Ascending aorta (tissue), 2 donors: ENCODE measurements at regions of chr19 and their contacts with region 1.

Region 1: GRCh38 chr19:36772311-36773222 is at the start of gene ZNF850:
- DNase-seq: peak; percentile 83 to 95
- H3K4me3 ChIP-seq: peak within 1 kb of the TSS; percentile 69 to 82
- H3K27ac ChIP-seq: peak within 1 kb of the TSS; percentile 74 to 86
- H3K4me1 ChIP-seq: peaks cover 0 to 6% of the 10 kb centered on the region in 2 donors
- H3K27me3 ChIP-seq: no peaks in the 10 kb centered on the region
- CTCF ChIP-seq: no peak
- total RNA-seq, gene ZNF850: 5.1 TPM

Region 2: DNA sequence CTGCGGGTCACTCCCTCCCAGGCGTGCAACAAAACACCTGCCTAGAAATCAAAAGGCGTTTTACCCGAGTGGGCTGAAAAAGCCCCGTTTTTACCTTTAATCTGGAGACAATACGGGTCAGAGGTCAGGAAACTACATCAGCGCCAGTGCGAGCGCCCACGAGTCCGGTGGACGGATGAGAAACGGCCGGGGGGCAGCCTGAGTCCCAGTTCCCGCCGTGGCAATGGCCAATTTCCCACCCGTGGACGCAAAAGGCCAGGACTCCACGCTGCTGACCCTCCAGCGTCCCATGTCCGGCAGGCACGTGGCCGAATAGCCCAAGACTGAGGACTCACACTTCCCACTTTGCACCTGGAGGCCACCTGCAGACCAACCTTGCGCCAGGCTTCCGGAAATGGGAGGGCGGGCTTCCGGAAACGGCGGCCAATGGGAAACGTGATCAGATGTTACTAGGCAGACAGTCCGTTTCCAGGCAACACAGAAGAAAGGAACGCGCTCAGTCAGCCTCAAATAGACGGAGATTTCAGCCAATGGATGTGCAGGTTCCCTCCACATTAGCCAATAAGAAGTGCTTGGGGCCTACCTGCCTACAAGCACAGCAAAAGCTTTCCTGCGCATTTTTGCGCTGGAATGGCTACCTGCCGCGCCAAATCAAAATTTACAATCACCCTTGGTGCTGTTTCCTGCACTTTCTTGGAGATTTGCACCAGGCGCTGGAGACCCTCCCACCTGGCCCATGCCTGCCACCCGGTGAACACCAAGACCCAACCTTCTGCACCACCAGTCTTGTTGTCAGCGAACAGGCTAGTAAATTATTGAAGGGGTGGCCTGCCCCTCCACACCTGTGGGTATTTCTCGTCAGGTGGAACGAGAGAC is 441.0 kb before region 1 on chr19:
- intact Hi-C with region 1: no loop called
- DNase-seq: peak; percentile 43 to 83
- H3K4me3 ChIP-seq: peak overlapping the region; percentile 61 to 67
- H3K27ac ChIP-seq: no peak overlapping the region
- H3K4me1 ChIP-seq: peaks cover 0 to 3% of the 10 kb centered on the region in 2 donors
- H3K27me3 ChIP-seq: no peaks in the 10 kb centered on the region
- CTCF ChIP-seq: no peak

Region 3: DNA sequence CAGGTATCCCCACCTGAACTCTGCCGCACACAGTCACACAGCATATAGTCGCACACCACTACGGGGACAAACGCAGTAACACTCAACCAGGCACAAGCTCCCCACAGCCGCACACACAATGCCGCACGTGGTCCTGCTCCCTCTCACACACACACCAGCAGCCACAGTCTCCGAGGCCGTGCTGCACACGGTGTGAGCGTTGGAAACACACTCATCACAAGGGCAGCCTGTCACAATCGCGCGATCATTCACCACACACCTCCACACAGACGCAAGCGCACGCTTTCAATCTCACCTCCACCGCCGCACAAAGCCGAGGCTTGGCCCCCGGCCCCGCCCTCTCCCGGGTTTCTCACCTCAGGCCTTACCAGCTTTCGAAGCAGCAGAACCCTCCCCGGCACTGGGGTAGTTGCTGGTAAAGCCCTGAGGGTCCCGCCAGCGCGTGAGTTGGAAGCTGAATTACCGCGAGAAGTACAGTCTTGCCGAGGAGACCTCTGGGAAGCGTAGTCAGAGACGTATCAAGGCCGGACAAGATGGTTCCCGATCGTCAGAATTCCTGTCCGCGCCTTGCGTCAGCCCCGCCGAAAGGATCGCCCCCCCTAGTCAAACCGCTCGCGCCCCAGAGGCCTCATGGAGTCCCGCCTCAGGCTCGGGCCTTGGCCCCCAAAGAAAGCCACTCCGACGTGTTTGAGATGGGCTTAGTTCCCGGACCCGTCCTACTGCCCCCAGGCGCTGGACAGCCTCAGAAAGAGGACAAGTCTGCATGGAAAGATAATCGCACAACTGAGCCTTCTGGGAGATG is 283.2 kb before region 1 on chr19 and contains the start of gene ZNF566:
- intact Hi-C with region 1: loop called (anchors 2 kb)
- DNase-seq: peak; percentile 81 to 96
- H3K4me3 ChIP-seq: peak within 1 kb of the TSS; percentile 71 to 72
- H3K27ac ChIP-seq: peak within 1 kb of the TSS; percentile 92 to 94
- H3K4me1 ChIP-seq: peaks cover 0 to 5% of the 10 kb centered on the region in 2 donors
- H3K27me3 ChIP-seq: no peaks in the 10 kb centered on the region
- CTCF ChIP-seq: peak in 1 of 3 experiments; percentile 13
- total RNA-seq, gene ZNF566: 9.9 TPM

Region 4: DNA sequence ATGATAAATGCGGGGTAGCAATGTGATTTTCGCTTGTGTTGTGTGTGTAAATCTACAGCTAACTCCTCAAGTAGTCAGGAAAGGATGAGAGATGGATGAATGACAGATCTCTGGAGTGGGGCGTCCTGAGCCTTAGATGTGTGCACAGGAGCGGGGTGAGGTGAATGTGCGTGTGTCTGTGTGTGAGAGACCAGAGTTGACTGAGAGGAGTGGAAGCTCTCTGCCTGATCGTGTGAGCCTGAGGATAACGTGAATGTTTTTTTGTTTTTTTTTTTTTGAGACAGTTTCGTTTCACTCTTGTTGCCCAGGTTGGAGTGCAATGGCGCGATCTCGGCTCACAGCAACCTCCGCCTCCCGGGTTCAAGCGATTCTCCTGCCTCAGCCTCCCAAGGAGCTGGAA is 106.7 kb before region 1 on chr19:
- intact Hi-C with region 1: loop called (anchors 2 kb)
- DNase-seq: no peak
- H3K4me3 ChIP-seq: peak overlapping the region; percentile 74 to 92
- H3K27ac ChIP-seq: no peak overlapping the region
- H3K4me1 ChIP-seq: peaks cover 0 to 3% of the 10 kb centered on the region in 2 donors
- H3K27me3 ChIP-seq: no peaks in the 10 kb centered on the region
- CTCF ChIP-seq: no peak

Region 5: DNA sequence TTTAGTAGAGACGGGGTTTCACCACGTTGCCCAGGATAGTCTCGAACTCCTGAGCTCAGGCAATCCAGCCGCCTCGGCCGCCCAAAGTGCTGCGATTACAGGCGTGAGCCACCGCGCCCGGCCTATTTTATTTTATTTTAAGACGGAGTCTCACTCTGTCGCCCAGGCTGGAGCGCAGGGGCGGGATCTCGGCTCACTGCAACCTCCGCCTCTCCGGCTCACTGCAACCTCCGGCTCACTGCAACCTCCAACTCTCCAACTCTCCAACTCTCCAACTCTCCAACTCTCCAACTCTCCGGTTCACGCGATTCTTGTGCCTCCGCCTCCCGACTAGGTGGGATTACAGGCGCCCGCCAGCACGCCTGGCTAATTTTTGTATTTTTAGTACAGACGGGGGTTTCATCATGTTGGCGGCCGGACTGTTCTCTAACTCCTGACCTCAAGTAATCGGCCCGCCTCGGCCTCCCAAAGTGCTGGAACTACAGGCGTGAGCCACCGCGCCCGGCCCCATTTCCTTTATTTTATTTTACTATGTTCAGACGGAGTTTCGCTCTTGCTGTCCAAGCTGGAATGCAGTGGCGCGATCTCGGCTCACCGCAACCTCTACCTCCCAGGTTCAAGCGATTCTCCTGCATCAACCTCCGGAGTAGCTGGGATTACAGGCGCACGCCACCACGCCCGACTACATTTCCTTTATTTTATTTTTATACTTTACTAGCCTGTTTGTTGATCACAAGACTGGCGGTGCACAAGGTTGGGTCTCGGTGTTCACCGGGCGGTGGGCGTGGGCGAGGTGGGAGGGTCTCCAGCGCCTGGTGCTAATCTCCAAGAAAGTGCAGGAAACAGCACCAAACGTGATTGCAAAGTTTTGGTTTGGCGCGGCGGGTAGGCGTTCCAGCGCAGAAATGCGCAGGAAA is 23.8 kb after region 1 on chr19:
- intact Hi-C with region 1: loop called (anchors 1 kb)
- DNase-seq: no peak
- H3K4me3 ChIP-seq: peak overlapping the region; percentile 87 to 88
- H3K27ac ChIP-seq: peak overlapping the region in 1 of 2 donors; percentile 68
- H3K4me1 ChIP-seq: peaks cover 0 to 3% of the 10 kb centered on the region in 2 donors
- H3K27me3 ChIP-seq: no peaks in the 10 kb centered on the region
- CTCF ChIP-seq: no peak

Region 6: GRCh38 chr19:36850559-36851442 is 78.2 kb after region 1 on chr19 and contains the start of gene ZNF345:
- intact Hi-C with region 1: loop called (anchors 1 kb)
- DNase-seq: peak; percentile 77 to 96
- H3K4me3 ChIP-seq: peak within 1 kb of the TSS; percentile 78 to 84
- H3K27ac ChIP-seq: peak within 1 kb of the TSS; percentile 83 to 88
- H3K4me1 ChIP-seq: peaks cover 0 to 5% of the 10 kb centered on the region in 2 donors
- H3K27me3 ChIP-seq: no peaks in the 10 kb centered on the region
- CTCF ChIP-seq: no peak
- total RNA-seq, gene ZNF345: 8.0 TPM

Region 7: GRCh38 chr19:36898422-36898821 is 125.9 kb after region 1 on chr19:
- intact Hi-C with region 1: no loop called
- DNase-seq: no peak
- H3K4me3 ChIP-seq: no peak overlapping the region
- H3K27ac ChIP-seq: no peak overlapping the region
- H3K4me1 ChIP-seq: no peaks in the 10 kb centered on the region
- H3K27me3 ChIP-seq: no peaks in the 10 kb centered on the region
- CTCF ChIP-seq: no peak

Region 8: DNA sequence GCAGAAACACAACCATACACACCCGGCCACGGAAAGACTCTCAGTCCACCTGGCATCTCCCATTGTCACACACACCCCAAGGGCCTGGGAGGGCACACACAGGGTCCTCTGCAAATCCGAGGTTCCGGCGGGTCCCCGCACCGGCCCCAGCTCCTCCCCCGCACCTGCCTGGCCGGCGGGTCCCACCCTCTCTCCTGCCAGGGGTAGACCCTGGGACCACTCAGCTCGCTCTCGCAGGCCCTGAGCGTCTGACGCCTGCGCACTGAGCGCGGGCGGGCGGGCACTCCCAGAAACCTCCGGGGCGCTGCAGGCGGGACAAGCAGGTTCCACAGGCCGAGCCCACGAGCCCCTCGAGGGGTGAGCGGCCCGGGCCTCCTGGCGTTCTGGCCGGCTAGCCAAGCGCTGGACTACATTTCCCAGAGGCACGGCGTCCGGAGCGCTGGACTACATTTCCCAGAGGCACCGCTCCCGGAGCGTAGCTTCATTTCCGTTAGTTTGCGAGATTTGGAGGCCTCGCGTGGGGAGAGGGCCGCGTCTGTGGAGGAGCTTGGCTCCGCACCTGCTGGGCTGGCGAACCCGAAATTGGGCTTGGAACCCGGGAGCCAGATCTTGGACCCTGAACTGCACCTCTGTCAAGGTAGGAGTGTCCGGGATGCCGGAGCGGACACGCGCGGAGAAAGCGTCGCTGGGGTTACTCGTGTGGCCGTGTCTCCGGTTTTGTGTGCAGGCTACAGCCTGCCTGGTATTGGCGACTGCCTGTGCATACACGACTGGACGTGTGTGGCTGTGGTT is 305.6 kb after region 1 on chr19 and contains the start of gene ZNF420:
- intact Hi-C with region 1: loop called (anchors 2 kb)
- DNase-seq: peak; percentile 77 to 96
- H3K4me3 ChIP-seq: peak within 1 kb of the TSS; percentile 84 to 87
- H3K27ac ChIP-seq: peak within 1 kb of the TSS; percentile 87 to 91
- H3K4me1 ChIP-seq: peaks cover 6 to 7% of the 10 kb centered on the region in 2 donors
- H3K27me3 ChIP-seq: no peaks in the 10 kb centered on the region
- CTCF ChIP-seq: no peak
- total RNA-seq, gene ZNF420: 69.9 TPM

Region 9: DNA sequence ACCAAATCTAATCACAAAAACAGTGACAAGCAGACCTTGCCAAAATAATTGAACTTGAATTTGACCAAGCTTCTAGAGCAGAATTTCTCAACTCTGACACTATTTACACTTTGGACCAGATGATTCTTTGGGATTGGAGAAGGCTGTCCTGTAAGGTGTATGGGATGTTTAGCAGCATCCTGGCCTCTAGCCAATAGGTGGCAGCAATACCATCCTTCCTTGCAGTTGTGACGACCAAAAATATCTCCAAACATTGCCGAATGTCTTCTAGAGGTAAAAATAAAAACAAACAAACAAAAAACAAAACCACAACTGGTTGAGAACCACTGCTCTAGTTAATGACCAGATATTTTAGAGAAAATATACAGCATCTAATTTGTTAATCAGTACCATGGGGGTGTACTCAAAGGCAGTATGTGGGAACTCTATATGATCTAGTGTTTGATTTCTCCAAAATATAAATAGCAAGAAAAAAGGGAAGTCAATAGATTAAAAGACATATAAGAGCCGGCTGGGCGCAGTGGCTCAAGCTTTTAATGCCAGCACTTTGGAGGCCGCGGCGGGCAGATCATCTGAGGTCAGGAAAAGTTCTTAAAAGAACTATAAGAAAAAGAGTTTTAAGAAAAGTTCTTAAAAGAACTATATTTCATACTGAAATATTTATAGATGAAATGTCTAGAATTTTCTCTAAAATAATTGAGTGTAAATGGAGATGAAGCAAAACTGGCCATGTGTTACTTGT is 537.4 kb after region 1 on chr19:
- intact Hi-C with region 1: loop called (anchors 10 kb)
- DNase-seq: no peak
- H3K4me3 ChIP-seq: no peak overlapping the region
- H3K27ac ChIP-seq: no peak overlapping the region
- H3K4me1 ChIP-seq: no peaks in the 10 kb centered on the region
- H3K27me3 ChIP-seq: no peaks in the 10 kb centered on the region
- CTCF ChIP-seq: no peak